ENCODE measurements at regions of chr5 and their contacts with region 1.

Region 1: DNA sequence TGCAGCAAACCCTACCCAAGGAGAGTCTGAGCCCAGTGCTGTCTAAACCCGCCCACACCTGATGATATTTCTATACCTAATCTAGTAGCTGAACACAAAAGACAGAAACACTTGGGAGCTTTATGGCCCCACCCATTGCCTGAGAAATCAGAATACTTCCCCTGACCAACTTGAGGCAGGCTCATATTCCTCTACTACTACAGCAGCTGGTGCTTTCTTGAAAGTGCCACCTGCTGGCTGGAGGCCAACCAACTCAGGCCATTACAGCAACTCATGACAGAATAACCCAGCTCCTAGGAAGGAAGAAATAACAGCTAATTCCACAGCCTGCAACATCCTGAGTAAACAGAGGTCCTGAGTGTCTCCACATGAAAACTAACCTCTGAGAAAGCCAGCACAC is 173.5 kb upstream of the SPEF2 start:
- DNase-seq: no peak
- H3K4me3 ChIP-seq: no peak overlapping the region
- CTCF ChIP-seq: no peak
- POLR2A ChIP-seq: no peak

Region 2: GRCh38 chr5:35089334-35090314 is 354.6 kb before region 1 on chr5:
- intact Hi-C with region 1: loop called (anchors 5 kb)
- DNase-seq: peak; percentile 73 to 89
- H3K4me3 ChIP-seq: no peak overlapping the region
- CTCF ChIP-seq: no peak
- POLR2A ChIP-seq: no peak

Region 3: GRCh38 chr5:35331956-35332950 is 111.9 kb before region 1 on chr5:
- intact Hi-C with region 1: no loop called
- DNase-seq: peak in 1 of 2 donors; percentile 34
- H3K4me3 ChIP-seq: no peak overlapping the region
- CTCF ChIP-seq: no peak
- POLR2A ChIP-seq: no peak

Region 4: DNA sequence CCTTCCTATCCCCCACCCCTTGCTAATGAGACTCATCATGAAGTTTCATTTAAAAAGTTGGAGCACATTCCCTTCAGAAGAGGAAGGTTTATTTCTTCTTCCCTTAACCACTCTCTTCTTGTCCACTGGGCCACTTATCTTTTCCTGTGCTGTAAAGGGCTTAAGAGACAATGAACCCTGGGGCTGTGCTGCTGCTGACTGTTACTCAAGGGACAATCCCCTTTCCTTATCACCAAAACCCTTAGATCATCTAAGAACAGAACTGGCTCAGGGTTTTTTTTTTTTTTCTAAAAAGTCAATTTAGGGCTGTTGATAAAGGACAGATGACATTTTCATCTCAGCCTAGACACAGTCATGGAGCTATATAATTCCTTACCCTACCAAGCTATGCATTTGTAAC is 464.6 kb after region 1 on chr5:
- intact Hi-C with region 1: no loop called
- DNase-seq: no peak
- H3K4me3 ChIP-seq: no peak overlapping the region
- CTCF ChIP-seq: no peak
- POLR2A ChIP-seq: no peak

Measured in lower leg skin (tissue), 4 donors.